AG04449 (cell line): ENCODE measurements at regions of chr4 and their contacts with region 1.

Region 1: GRCh38 chr4:122577808-122578781 is 42.8 kb downstream of the IL21 start:
- DNase-seq: peak; percentile 16
- H3K4me3 ChIP-seq: no peak overlapping the region
- CTCF ChIP-seq: peak; percentile 67

Region 2: GRCh38 chr4:121900132-121900983 is 677.7 kb before region 1 on chr4:
- CTCF ChIA-PET with region 1: interaction called, 87 read pairs
- POLR2A ChIA-PET with region 1: no interaction called
- DNase-seq: peak; percentile 4
- H3K4me3 ChIP-seq: no peak overlapping the region
- CTCF ChIP-seq: peak; percentile 64

Region 3: DNA sequence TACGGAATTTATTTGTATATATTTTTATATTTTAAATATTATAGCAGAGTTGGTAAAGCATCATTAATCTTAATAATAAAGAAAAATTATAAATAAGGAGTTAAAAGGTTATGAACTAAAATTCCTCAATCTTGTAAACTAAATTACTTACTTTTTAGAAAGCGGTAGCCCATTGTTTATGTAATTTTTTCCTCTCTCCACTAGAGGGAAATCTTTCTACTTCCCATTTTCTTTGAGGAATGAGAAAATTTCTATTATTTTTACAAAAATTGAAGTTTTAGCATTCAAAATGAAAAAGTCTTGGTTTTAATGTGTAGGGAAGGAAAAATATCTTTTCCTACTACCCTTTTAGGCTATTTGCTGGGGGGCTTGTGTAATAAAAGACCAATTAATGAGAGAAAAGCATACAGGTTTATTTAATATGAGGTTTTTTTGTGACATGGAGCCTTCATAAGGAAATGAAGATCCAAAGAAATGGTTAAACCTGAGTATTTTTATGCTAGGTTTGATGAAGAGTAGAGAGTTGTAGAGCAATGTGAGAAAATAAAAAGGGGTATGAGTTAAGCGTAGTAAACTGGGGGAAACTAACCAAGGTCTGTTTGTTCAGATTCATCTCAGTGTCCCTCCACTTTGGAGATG is 268.0 kb before region 1 on chr4:
- CTCF ChIA-PET with region 1: interaction called, 20 read pairs
- POLR2A ChIA-PET with region 1: no interaction called
- DNase-seq: no peak
- H3K4me3 ChIP-seq: no peak overlapping the region
- CTCF ChIP-seq: peak; percentile 9

Region 4: GRCh38 chr4:122562449-122562848 is 15.6 kb before region 1 on chr4:
- CTCF ChIA-PET with region 1: interaction called, 11 read pairs
- POLR2A ChIA-PET with region 1: no interaction called
- DNase-seq: no peak
- H3K4me3 ChIP-seq: no peak overlapping the region
- CTCF ChIP-seq: no peak

Region 5: DNA sequence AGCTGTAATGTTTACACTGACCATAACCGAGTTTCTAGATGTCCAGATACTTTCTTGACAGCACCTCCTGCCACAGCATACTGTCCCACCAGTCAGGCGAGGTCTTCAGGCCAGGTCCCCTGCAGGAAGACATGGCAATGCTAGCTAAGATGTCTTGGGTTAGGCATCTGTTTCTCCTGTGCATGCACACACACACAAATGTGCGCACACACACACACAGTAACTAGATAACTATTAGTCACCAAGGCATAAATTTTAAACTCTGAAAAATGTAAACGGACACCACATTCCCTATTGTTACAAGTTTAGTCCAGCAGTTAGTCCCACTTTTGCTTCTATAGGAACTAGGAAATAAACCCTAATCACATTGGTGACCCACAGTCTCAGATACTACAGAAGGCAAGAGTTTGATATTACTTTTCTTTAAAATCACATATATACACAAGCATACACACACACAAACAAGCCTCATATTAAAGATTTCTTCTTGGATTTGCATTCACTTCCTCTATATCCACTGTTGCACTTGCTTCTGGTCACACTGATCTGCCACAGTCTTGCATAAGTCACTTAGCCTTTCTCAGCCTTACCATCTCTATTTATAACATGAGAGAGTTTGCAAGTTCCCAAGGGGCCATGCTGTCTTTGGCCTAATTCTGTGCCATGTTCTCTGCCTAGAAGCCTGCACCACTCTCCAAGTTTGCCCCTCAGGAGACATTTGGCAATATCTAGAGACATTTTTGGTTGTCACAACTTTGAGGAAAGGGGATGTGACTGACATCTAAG is 10.6 kb after region 1 on chr4:
- CTCF ChIA-PET with region 1: interaction called, 22 read pairs
- POLR2A ChIA-PET with region 1: no interaction called
- DNase-seq: peak; percentile 16
- H3K4me3 ChIP-seq: no peak overlapping the region
- CTCF ChIP-seq: no peak

Region 6: DNA sequence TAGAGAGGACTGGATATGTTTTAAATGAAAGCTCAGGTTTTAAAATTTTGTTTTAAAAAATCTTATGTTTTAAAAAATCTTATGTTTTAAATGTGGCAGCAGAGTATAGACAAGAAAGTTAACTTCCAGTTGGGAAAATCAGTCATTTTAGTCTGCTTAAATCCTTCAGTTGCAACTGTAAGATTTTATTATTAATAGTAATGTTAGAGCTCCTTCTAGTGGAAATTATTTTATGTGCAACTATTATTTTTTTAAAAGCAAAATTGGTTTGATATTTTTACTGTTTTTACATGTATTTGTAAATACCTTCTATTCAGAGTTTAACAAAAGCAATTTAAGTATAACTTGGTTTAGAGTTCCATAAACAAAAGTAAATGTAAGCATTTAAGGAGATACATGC is 352.8 kb after region 1 on chr4:
- CTCF ChIA-PET with region 1: interaction called, 32 read pairs
- POLR2A ChIA-PET with region 1: no interaction called
- DNase-seq: no peak
- H3K4me3 ChIP-seq: no peak overlapping the region
- CTCF ChIP-seq: no peak

Region 7: GRCh38 chr4:123350191-123350544 is 772.1 kb after region 1 on chr4:
- CTCF ChIA-PET with region 1: no interaction called
- POLR2A ChIA-PET with region 1: no interaction called
- DNase-seq: no peak
- H3K4me3 ChIP-seq: no peak overlapping the region
- CTCF ChIP-seq: no peak